ENCODE measurements at regions of chr15 and their contacts with region 1.

Region 1: GRCh38 chr15:34038023-34038870 is 757 bp downstream of the AVEN start:
- DNase-seq: peak; percentile 44 to 89 (median 73)
- ATAC-seq: peak; percentile 84
- H3K4me3 ChIP-seq: peak overlapping the region; percentile 78 to 97
- H3K4me3 Mint-ChIP-seq: peak overlapping the region; percentile 94
- H3K27ac ChIP-seq: peak overlapping the region; percentile 75 to 88
- H3K27ac Mint-ChIP-seq: peak overlapping the region; percentile 94
- H3K4me1 ChIP-seq: peaks cover 19% of the 10 kb centered on the region
- H3K4me1 Mint-ChIP-seq: peaks cover 20% of the 10 kb centered on the region
- H3K27me3 ChIP-seq: no peaks in the 10 kb centered on the region
- H3K27me3 Mint-ChIP-seq: no peaks in the 10 kb centered on the region
- CTCF ChIP-seq: no peak

Region 2: GRCh38 chr15:34337557-34338306 is 299.5 kb after region 1 on chr15 and contains the start of gene SLC12A6:
- CTCF ChIA-PET with region 1: interaction called, 4 read pairs
- POLR2A ChIA-PET with region 1: no interaction called
- intact Hi-C with region 1: loop called (anchors 2 to 5 kb)
- DNase-seq: peak; percentile 81 to 95 (median 89)
- ATAC-seq: peak; percentile 84
- H3K4me3 ChIP-seq: peak within 1 kb of the TSS; percentile 81 to 97
- H3K4me3 Mint-ChIP-seq: peak within 1 kb of the TSS; percentile 98
- H3K27ac ChIP-seq: peak within 1 kb of the TSS; percentile 75 to 80
- H3K27ac Mint-ChIP-seq: peak within 1 kb of the TSS; percentile 97
- H3K4me1 ChIP-seq: peaks cover 55% of the 10 kb centered on the region
- H3K4me1 Mint-ChIP-seq: peaks cover 61% of the 10 kb centered on the region
- H3K27me3 ChIP-seq: no peaks in the 10 kb centered on the region
- H3K27me3 Mint-ChIP-seq: no peaks in the 10 kb centered on the region
- CTCF ChIP-seq: no peak
- total RNA-seq, gene SLC12A6: 55.7 to 60.8 TPM

Region 3: GRCh38 chr15:34437687-34438086 is 399.4 kb after region 1 on chr15 and contains the start of gene GOLGA8A:
- CTCF ChIA-PET with region 1: no interaction called
- POLR2A ChIA-PET with region 1: no interaction called
- intact Hi-C with region 1: loop called in 1 of 2 experiments (anchors 2 kb)
- DNase-seq: peak; percentile 49 to 88 (median 82)
- ATAC-seq: peak; percentile 82
- H3K4me3 ChIP-seq: peak within 1 kb of the TSS; percentile 47 to 73
- H3K4me3 Mint-ChIP-seq: peak within 1 kb of the TSS; percentile 96
- H3K27ac ChIP-seq: peak within 1 kb of the TSS in 1 of 2 experiments; percentile 27
- H3K27ac Mint-ChIP-seq: peak within 1 kb of the TSS; percentile 90
- H3K4me1 ChIP-seq: peaks cover 11% of the 10 kb centered on the region
- H3K4me1 Mint-ChIP-seq: peaks cover 24% of the 10 kb centered on the region
- H3K27me3 ChIP-seq: no peaks in the 10 kb centered on the region
- H3K27me3 Mint-ChIP-seq: peaks cover 2% of the 10 kb centered on the region
- CTCF ChIP-seq: no peak
- total RNA-seq, gene GOLGA8A: 199 to 214 TPM

Region 4: GRCh38 chr15:34987985-34988873 is 950.0 kb after region 1 on chr15 and contains the start of gene ZNF770:
- CTCF ChIA-PET with region 1: no interaction called
- POLR2A ChIA-PET with region 1: interaction called, 3 read pairs
- intact Hi-C with region 1: loop called (anchors 1 to 2 kb)
- DNase-seq: peak; percentile 72 to 93 (median 81)
- ATAC-seq: peak; percentile 89
- H3K4me3 ChIP-seq: peak within 1 kb of the TSS; percentile 99 to 100
- H3K4me3 Mint-ChIP-seq: peak within 1 kb of the TSS; percentile 99
- H3K27ac ChIP-seq: peak within 1 kb of the TSS; percentile 95 to 96
- H3K27ac Mint-ChIP-seq: peak within 1 kb of the TSS; percentile 99
- H3K4me1 ChIP-seq: peaks cover 24% of the 10 kb centered on the region
- H3K4me1 Mint-ChIP-seq: peaks cover 45% of the 10 kb centered on the region
- H3K27me3 ChIP-seq: no peaks in the 10 kb centered on the region
- H3K27me3 Mint-ChIP-seq: peaks cover 1% of the 10 kb centered on the region
- CTCF ChIP-seq: no peak
- total RNA-seq, gene ZNF770: 32.9 to 37.7 TPM